Psoas muscle (tissue), 8 donors: ENCODE measurements at regions of chr15 and their contacts with region 1.

Region 1: GRCh38 chr15:58628206-58628947 is 121.1 kb downstream of the ADAM10 start:
- DNase-seq: no peak
- ATAC-seq: no peak
- H3K4me3 ChIP-seq: peak overlapping the region; percentile 52
- H3K27ac ChIP-seq: peak overlapping the region; percentile 46
- H3K4me1 ChIP-seq: peaks cover 17% of the 10 kb centered on the region
- H3K27me3 ChIP-seq: no peaks in the 10 kb centered on the region
- CTCF ChIP-seq: no peak

Region 2: GRCh38 chr15:58043192-58043903 is 585.0 kb before region 1 on chr15:
- intact Hi-C with region 1: no loop called
- DNase-seq: peak; percentile 21 to 52
- ATAC-seq: peak in 1 of 4 donors; percentile 29
- H3K4me3 ChIP-seq: no peak overlapping the region
- H3K27ac ChIP-seq: no peak overlapping the region
- H3K4me1 ChIP-seq: no peaks in the 10 kb centered on the region
- H3K27me3 ChIP-seq: peaks cover 0 to 6% (median 2%) of the 10 kb centered on the region in 3 donors
- CTCF ChIP-seq: peak; percentile 60

Region 3: GRCh38 chr15:58269455-58270414 is 358.6 kb before region 1 on chr15:
- intact Hi-C with region 1: loop called in 1 of 2 experiments (anchors 10 kb)
- DNase-seq: no peak
- ATAC-seq: peak; percentile 70 to 93 (median 86)
- H3K4me3 ChIP-seq: no peak overlapping the region
- H3K27ac ChIP-seq: no peak overlapping the region
- H3K4me1 ChIP-seq: no peaks in the 10 kb centered on the region
- H3K27me3 ChIP-seq: no peaks in the 10 kb centered on the region
- CTCF ChIP-seq: peak; percentile 63

Region 4: DNA sequence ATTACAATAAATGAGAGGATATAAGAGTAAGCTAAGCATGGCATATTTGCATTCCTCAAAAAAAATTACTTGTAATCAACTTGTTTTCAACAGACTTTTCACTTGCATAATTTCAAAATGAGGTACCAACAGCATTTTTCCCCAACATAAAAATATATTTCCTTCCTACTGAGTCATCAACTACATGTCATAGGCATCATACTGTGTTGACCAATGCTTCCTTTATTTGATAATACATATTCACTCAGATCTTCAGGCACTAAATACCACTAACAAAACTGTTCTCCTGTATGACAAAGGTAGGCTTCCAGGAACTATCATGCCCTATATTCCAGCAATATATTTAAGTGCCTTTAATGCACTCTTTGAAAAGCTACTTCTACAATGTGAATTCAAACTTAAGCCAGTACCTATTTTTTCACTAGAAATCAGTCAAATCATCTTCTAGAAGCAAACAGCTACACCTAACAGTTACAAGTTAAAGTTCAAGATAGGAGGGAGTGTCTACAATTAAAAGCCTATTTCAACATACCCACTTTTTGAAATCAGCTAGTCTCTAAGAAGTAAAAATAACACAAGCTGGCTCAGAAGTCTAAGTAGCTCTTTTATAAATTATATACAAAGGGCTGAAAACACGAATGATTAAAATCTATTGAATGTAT is 109.8 kb after region 1 on chr15:
- intact Hi-C with region 1: no loop called
- DNase-seq: no peak
- ATAC-seq: no peak
- H3K4me3 ChIP-seq: no peak overlapping the region
- H3K27ac ChIP-seq: no peak overlapping the region
- H3K4me1 ChIP-seq: peaks cover 40% of the 10 kb centered on the region
- H3K27me3 ChIP-seq: no peaks in the 10 kb centered on the region
- CTCF ChIP-seq: no peak